Heart left ventricle (tissue), 16 donors: ENCODE measurements at regions of chr2 and their contacts with region 1.

Region 1: GRCh38 chr2:127681288-127681804 is 6.0 kb upstream of the LIMS2 start:
- DNase-seq: peak in 4 of 5 donors; percentile 63 to 82 (median 70)
- ATAC-seq: peak in 3 of 4 donors; percentile 44 to 74 (median 51)
- H3K4me3 ChIP-seq: peak overlapping the region; percentile 32 to 60 (median 54)
- H3K27ac ChIP-seq: peak overlapping the region; percentile 38 to 82 (median 74)
- H3K4me1 ChIP-seq: peaks cover 0 to 50% (median 36%) of the 10 kb centered on the region in 12 donors
- H3K27me3 ChIP-seq: peaks cover 0 to 5% (median 0%) of the 10 kb centered on the region in 9 donors
- CTCF ChIP-seq: no peak
- POLR2A ChIP-seq: peak in 1 of 2 donors; percentile 66

Region 2: GRCh38 chr2:127408004-127408806 is 273.1 kb before region 1 on chr2:
- intact Hi-C with region 1: no loop called
- DNase-seq: peak; percentile 93 to 97 (median 94)
- ATAC-seq: peak; percentile 74 to 95 (median 92)
- H3K4me3 ChIP-seq: peak overlapping the region; percentile 9 to 75 (median 59)
- H3K27ac ChIP-seq: peak overlapping the region; percentile 78 to 94 (median 90)
- H3K4me1 ChIP-seq: peaks cover 0 to 67% (median 23%) of the 10 kb centered on the region in 12 donors
- H3K27me3 ChIP-seq: no peaks in the 10 kb centered on the region
- CTCF ChIP-seq: no peak
- POLR2A ChIP-seq: peak in 1 of 2 donors; percentile 54

Region 3: GRCh38 chr2:127637725-127638252 is 43.6 kb before region 1 on chr2:
- intact Hi-C with region 1: loop called in 2 of 10 experiments (anchors 5 kb)
- DNase-seq: peak; percentile 65 to 78 (median 69)
- ATAC-seq: peak; percentile 11 to 59 (median 20)
- H3K4me3 ChIP-seq: peak overlapping the region in 1 of 12 donors; percentile 1
- H3K27ac ChIP-seq: peak overlapping the region; percentile 76 to 96 (median 89)
- H3K4me1 ChIP-seq: peaks cover 20 to 90% (median 66%) of the 10 kb centered on the region in 12 donors
- H3K27me3 ChIP-seq: no peaks in the 10 kb centered on the region
- CTCF ChIP-seq: no peak
- POLR2A ChIP-seq: no peak

Region 4: DNA sequence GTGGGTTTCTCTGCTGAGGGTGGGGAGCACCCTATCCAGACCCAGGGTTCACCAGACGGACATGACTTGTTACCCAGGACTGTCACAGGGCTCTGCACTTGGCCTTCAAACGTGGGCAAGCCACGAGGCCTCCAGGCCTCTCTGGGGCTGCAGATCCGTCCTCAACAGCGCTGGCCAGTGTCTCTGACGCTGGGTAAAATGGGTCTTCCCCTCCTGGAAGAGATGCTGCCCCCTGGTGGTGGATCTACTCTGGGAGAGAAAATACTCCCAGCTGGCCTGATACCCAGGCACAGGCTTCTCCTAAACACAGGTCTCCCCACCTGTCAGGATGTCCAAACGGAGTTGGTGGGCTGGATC is 31.7 kb before region 1 on chr2:
- intact Hi-C with region 1: loop called in 2 of 10 experiments (anchors 2 to 5 kb)
- DNase-seq: peak; percentile 84 to 93 (median 85)
- ATAC-seq: peak; percentile 8 to 38 (median 18)
- H3K4me3 ChIP-seq: no peak overlapping the region
- H3K27ac ChIP-seq: peak overlapping the region; percentile 50 to 98 (median 84)
- H3K4me1 ChIP-seq: peaks cover 29 to 91% (median 80%) of the 10 kb centered on the region in 12 donors
- H3K27me3 ChIP-seq: no peaks in the 10 kb centered on the region
- CTCF ChIP-seq: peak; percentile 73 to 93 (median 88)
- POLR2A ChIP-seq: no peak

Region 5: DNA sequence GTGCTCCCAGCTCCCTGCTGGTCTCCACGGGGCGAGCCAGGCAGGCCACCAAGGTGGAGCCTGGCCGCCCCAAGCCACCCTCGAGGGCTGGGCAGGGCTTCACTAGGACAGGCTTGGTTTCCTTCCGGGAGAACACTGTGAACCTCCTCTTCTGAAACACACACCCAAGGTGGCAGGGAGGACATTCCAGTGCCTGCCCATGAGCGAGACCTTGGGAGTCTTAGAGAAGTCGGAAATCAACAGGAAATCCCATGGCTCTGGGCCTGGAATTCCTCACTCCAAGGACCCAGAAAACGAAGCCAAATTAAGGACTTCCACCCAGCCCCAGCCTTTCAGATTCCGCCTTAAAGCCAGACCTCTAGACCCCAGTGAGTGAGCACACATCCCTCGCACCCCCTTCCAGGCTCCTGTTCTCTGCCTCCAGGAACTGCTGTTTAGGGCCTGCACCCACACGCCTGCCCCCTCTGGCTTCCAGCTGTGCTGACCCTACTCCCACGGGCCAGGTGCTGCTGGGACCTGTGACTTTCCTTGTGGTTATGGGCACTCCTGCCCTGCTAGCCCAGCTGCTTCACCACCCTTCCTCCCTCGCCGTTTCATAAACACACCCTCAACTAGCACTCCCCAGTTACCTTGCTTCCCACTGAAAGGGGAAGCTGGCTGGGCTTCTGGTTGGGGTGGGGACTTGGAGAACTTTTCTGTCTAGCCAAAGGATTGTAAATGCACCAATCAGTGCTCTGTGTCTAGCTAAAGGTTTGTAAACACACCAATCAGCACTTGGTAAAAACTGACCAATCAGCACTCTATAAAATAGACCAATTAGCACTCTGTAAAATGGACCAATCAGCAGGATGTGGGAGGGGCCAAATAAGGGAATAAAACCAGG is 21.7 kb before region 1 on chr2:
- intact Hi-C with region 1: loop called in 1 of 10 experiments (anchors 2 kb)
- DNase-seq: peak; percentile 72 to 83 (median 74)
- ATAC-seq: peak; percentile 45 to 64 (median 46)
- H3K4me3 ChIP-seq: peak overlapping the region in 2 of 12 donors; percentile 12 to 13
- H3K27ac ChIP-seq: peak overlapping the region; percentile 76 to 98 (median 87)
- H3K4me1 ChIP-seq: peaks cover 24 to 99% (median 92%) of the 10 kb centered on the region in 12 donors
- H3K27me3 ChIP-seq: peaks cover 0 to 15% (median 0%) of the 10 kb centered on the region in 9 donors
- CTCF ChIP-seq: no peak
- POLR2A ChIP-seq: no peak

Region 6: GRCh38 chr2:127701193-127701650 is 19.9 kb after region 1 on chr2 and contains the start of gene SFT2D3:
- intact Hi-C with region 1: no loop called
- DNase-seq: peak; percentile 93 to 95 (median 95)
- ATAC-seq: peak; percentile 88 to 94 (median 88)
- H3K4me3 ChIP-seq: peak within 1 kb of the TSS; percentile 39 to 88 (median 69)
- H3K27ac ChIP-seq: peak within 1 kb of the TSS; percentile 90 to 99 (median 96)
- H3K4me1 ChIP-seq: peaks cover 0 to 45% (median 38%) of the 10 kb centered on the region in 12 donors
- H3K27me3 ChIP-seq: no peaks in the 10 kb centered on the region
- CTCF ChIP-seq: no peak
- POLR2A ChIP-seq: peak in 1 of 2 donors; percentile 90
- total RNA-seq, gene SFT2D3: 2.4 to 5.2 (median 3.7) TPM